ENCODE measurements at regions of chr1 and their contacts with region 1.

Region 1: GRCh38 chr1:42846257-42847110 is at the start of gene ZNF691:
- DNase-seq: peak; percentile 96

Region 2: DNA sequence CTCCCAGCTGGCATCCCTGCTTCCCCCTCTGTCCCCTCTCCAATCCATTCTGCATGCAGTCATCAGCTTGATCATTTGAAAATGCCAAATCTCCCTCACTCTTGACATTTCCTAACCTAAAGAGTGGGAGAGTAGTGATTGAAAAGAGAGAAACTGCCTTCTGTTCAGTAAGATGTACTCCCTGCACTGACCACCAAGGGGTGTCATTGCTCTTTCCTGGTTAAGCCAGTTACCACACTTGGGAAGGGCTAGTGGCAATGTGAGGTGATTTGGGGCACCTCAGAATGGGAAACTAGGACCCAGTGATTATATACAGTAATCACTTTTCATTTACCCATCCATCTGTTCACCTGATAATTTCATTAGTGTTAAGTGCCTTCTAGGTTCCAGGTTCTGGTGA is 68.6 kb before region 1 on chr1:
- CTCF ChIA-PET with region 1: no interaction called
- POLR2A ChIA-PET with region 1: interaction called, 16 read pairs
- DNase-seq: peak; percentile 63

Region 3: GRCh38 chr1:42816585-42817434 is 29.7 kb before region 1 on chr1 and contains the starts of genes ERMAP and SVBP:
- CTCF ChIA-PET with region 1: interaction called, 3 read pairs
- POLR2A ChIA-PET with region 1: interaction called, 75 read pairs
- DNase-seq: peak; percentile 98

Region 4: GRCh38 chr1:42830631-42831030 is 15.9 kb before region 1 on chr1:
- CTCF ChIA-PET with region 1: interaction called, 7 read pairs
- POLR2A ChIA-PET with region 1: interaction called, 75 read pairs
- DNase-seq: no peak

Region 5: DNA sequence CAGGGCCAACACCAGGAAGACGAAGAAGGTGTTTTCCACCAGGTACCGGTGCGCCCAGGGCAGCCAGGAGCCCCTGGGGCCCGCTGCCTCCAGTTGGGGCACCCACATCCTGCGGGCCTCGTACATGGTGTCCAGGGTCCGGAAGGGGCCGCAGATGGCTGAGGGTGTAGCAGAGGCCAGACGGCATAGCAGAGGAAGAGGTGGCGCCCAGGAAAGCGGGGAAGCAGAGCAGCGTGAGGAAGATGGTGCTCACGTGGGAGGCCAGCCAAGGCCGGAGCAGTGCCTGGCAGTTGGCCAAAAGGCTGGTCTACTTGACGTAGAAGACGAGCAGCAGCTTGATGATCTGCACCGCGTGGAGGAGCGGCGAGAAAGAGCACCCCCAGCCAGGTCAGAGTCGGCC is 40.3 kb after region 1 on chr1:
- CTCF ChIA-PET with region 1: no interaction called
- POLR2A ChIA-PET with region 1: no interaction called
- DNase-seq: no peak

Region 6: DNA sequence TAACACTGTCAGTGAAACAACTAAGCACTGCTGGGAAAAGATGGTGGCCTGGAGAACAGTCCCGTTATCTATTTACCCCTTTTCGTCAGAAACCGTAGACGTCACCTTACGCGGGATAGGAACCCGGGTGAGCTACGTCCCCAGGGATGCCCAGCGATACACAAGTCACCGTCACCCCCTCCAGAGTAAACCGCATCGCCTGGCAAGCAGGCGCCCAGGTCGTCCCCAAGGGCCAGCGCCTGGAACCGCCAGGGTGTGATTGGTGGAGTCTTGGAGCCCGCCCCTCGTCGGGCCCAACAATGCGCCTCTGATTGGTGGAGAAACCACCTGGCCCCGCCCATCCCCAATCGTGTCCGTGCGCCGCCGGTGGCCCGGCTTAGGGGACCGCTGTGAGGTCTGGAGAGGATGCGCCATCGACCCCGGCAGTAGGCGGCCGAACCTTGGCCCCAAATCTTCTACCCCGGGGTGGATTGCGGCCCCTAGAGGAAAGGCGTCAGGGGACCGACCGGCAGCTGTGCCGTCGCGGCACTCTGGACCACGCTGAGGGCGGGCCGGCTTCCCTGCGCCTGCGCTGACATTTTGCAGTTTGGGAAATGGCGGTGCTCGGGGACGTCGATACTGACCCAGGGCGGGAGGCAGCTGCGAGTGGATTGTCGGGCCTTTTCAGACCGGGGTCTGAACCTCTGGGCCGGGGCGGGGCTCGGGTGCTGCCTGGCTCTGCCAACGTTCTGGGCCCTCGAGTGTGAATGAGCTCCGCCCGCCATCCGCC is 77.8 kb after region 1 on chr1:
- CTCF ChIA-PET with region 1: no interaction called
- POLR2A ChIA-PET with region 1: interaction called, 11 read pairs
- DNase-seq: peak; percentile 95

Region 7: GRCh38 chr1:44714944-44715571 is 1868.6 kb after region 1 on chr1:
- CTCF ChIA-PET with region 1: no interaction called
- POLR2A ChIA-PET with region 1: no interaction called
- DNase-seq: peak; percentile 80

Measured in HEK293T (cell line).